ENCODE measurements at regions of chr17 and their contacts with region 1.

Region 1: GRCh38 chr17:79280866-79281572 is 206.4 kb downstream of the ENGASE start:
- DNase-seq: no peak
- ATAC-seq: no peak
- H3K4me3 ChIP-seq: no peak overlapping the region
- H3K4me3 Mint-ChIP-seq: no peak overlapping the region
- H3K27ac ChIP-seq: no peak overlapping the region
- H3K27ac Mint-ChIP-seq: no peak overlapping the region
- H3K4me1 ChIP-seq: no peaks in the 10 kb centered on the region
- H3K4me1 Mint-ChIP-seq: no peaks in the 10 kb centered on the region
- H3K27me3 ChIP-seq: no peaks in the 10 kb centered on the region
- H3K27me3 Mint-ChIP-seq: peaks cover 0 to 16% (median 5%) of the 10 kb centered on the region in 5 donors

Region 2: DNA sequence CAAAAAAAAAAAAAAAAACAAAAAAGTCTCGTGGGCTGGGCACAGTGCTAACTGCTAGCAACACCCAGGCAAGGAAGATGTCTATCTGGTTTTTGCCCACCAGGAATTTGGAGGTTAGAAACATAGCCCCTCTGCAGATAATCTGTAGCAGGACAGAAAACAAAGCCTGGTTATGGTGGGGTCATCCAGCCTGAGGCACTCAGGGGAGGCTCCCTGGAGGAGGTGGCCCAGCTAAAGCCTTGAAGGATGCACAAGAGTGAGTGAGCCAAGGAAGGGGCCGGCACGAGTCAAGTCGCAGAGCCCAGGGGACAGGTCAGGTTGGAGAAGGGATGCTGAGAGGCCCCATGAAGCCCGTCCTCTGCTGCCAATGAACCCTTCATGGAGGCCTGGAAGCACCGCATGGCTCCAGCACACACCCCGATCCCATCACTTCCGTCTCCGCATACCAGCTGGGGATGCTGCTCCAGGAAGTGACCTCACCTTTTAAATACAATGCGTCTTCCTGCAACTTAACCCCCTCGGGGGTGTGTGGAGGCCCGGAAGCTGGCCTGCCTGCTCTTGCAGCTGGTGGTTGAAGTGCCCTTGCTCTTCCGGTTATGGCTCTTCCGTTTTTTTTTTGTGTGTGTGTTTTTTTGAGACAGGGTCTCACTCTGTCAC is 119.9 kb before region 1 on chr17:
- CTCF ChIA-PET with region 1: no interaction called
- POLR2A ChIA-PET with region 1: no interaction called
- intact Hi-C with region 1: no loop called
- DNase-seq: peak in 8 of 9 donors; percentile 21 to 60 (median 38)
- ATAC-seq: peak; percentile 23
- H3K4me3 ChIP-seq: no peak overlapping the region
- H3K4me3 Mint-ChIP-seq: peak overlapping the region in 7 of 10 donors; percentile 25 to 52 (median 35)
- H3K27ac ChIP-seq: no peak overlapping the region
- H3K27ac Mint-ChIP-seq: peak overlapping the region in 7 of 9 donors; percentile 14 to 79 (median 58)
- H3K4me1 ChIP-seq: peaks cover 0 to 5% of the 10 kb centered on the region in 2 donors
- H3K4me1 Mint-ChIP-seq: peaks cover 0 to 11% (median 9%) of the 10 kb centered on the region in 7 donors
- H3K27me3 ChIP-seq: no peaks in the 10 kb centered on the region
- H3K27me3 Mint-ChIP-seq: no peaks in the 10 kb centered on the region

Region 3: GRCh38 chr17:79269620-79270019 is 11.4 kb before region 1 on chr17:
- CTCF ChIA-PET with region 1: no interaction called
- POLR2A ChIA-PET with region 1: no interaction called
- intact Hi-C with region 1: no loop called
- DNase-seq: no peak
- ATAC-seq: no peak
- H3K4me3 ChIP-seq: no peak overlapping the region
- H3K4me3 Mint-ChIP-seq: no peak overlapping the region
- H3K27ac ChIP-seq: no peak overlapping the region
- H3K27ac Mint-ChIP-seq: no peak overlapping the region
- H3K4me1 ChIP-seq: no peaks in the 10 kb centered on the region
- H3K4me1 Mint-ChIP-seq: peaks cover 0 to 3% (median 0%) of the 10 kb centered on the region in 7 donors
- H3K27me3 ChIP-seq: no peaks in the 10 kb centered on the region
- H3K27me3 Mint-ChIP-seq: peaks cover 8 to 44% (median 27%) of the 10 kb centered on the region in 5 donors

Region 4: DNA sequence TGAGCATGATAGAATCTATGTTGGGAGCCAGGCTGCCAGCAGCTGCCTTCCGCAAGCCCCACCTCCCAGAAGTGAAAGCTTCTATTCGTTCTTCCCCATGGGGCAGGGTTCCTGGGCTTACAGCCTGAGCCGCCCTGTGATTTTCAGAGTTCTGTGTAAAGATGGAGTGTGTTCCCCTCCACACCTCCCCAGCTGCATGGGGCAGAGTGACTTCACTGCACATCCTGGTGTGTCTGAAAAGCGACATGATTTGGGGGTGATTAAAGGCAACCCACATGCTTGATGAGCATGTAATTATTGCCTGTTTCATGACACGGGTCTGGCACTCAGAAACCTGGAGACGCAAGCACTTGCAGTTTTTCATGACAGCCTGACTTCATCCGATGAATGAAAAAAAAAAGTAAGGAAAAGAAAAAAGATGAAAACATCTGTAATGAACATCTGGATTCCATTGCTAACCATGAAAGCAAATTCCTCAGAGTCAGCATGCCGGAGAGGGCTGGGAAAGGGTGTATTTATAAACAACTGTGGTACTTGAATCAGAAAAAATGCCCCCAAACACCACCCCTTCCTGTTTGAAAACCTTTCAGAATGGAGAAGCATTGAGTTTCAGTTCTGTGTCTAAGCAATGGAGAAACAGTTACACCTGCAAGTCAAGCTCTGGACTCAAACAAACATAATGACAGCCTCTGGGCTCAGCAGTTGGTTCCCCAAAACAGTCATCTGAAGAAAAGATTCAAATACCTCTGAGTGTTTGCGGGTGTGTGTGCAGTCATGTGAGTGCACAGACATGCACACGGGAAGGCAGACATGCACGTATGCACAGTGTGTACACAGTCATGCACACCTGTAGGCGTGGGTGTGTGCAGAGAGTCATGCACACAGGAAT is 59.6 kb after region 1 on chr17:
- CTCF ChIA-PET with region 1: no interaction called
- POLR2A ChIA-PET with region 1: no interaction called
- intact Hi-C with region 1: loop called in 1 of 2 experiments (anchors 10 kb)
- DNase-seq: no peak
- ATAC-seq: peak; percentile 55
- H3K4me3 ChIP-seq: no peak overlapping the region
- H3K4me3 Mint-ChIP-seq: no peak overlapping the region
- H3K27ac ChIP-seq: no peak overlapping the region
- H3K27ac Mint-ChIP-seq: no peak overlapping the region
- H3K4me1 ChIP-seq: no peaks in the 10 kb centered on the region
- H3K4me1 Mint-ChIP-seq: no peaks in the 10 kb centered on the region
- H3K27me3 ChIP-seq: no peaks in the 10 kb centered on the region
- H3K27me3 Mint-ChIP-seq: peaks cover 7 to 48% (median 27%) of the 10 kb centered on the region in 5 donors